IMR-90 (cell line): ENCODE measurements at regions of chr3 and their contacts with region 1.

Region 1: DNA sequence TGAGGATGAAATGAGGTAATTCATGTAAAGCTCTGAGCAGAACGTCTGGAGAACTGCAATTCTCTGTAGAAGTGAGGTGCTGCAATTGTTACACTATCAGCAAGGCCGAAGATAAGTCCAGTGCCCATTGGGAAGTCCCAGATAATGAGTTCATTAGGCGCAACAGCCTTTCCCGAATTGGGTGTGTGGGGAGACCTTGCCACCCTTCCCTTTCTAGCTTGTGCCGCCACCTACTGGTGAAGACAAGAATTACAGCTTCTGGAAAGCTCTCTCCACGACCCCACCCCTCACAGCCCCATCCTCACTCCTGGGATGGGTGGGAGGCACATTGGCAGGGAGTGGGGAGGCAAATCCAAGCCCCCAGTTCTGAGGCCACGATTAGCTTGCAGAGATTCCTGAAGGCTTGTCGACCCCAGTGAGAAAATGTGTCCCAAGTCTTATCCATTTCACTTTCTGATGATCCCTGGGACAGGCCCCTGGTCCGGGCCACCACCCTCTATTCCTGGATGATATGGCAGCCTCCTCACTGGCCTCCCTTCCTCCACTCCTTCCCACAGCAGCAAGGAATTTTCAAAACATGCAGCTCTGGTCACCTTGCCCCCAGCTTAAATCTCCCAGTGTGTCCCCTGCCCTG is 36.4 kb downstream of the FAM3D start:
- DNase-seq: peak; percentile 57
- ATAC-seq: peak; percentile 66
- H3K4me3 ChIP-seq: no peak overlapping the region
- H3K27ac ChIP-seq: no peak overlapping the region
- H3K4me1 ChIP-seq: peaks cover 23% of the 10 kb centered on the region
- H3K27me3 ChIP-seq: no peaks in the 10 kb centered on the region
- CTCF ChIP-seq: peak; percentile 89
- POLR2A ChIP-seq: no peak
- RAD21 ChIP-seq: peak; percentile 85

Region 2: GRCh38 chr3:58305882-58306711 is 324.1 kb before region 1 on chr3 and contains the starts of genes HTD2 and RPP14:
- CTCF ChIA-PET with region 1: no interaction called
- POLR2A ChIA-PET with region 1: no interaction called
- dilution Hi-C with region 1: no loop called
- in situ Hi-C with region 1: no loop called
- intact Hi-C with region 1: loop called (anchors 10 kb)
- DNase-seq: peak; percentile 97
- ATAC-seq: peak; percentile 92
- H3K4me3 ChIP-seq: peak within 1 kb of the TSS; percentile 74
- H3K27ac ChIP-seq: peak within 1 kb of the TSS; percentile 94
- H3K4me1 ChIP-seq: peaks cover 6% of the 10 kb centered on the region
- H3K27me3 ChIP-seq: peaks cover 9% of the 10 kb centered on the region
- CTCF ChIP-seq: peak; percentile 98
- POLR2A ChIP-seq: peak; percentile 92
- RAD21 ChIP-seq: peak; percentile 42
- total RNA-seq, gene HTD2: 11.4 and 13.3 TPM in 2 replicates
- total RNA-seq, gene RPP14: 6.6 and 11.9 TPM in 2 replicates

Region 3: GRCh38 chr3:58332575-58333188 is 297.5 kb before region 1 on chr3 and contains the start of gene PXK:
- CTCF ChIA-PET with region 1: no interaction called
- POLR2A ChIA-PET with region 1: no interaction called
- dilution Hi-C with region 1: no loop called
- in situ Hi-C with region 1: loop called (anchors 10 kb)
- intact Hi-C with region 1: loop called (anchors 10 kb)
- DNase-seq: peak; percentile 70
- ATAC-seq: peak; percentile 87
- H3K4me3 ChIP-seq: peak within 1 kb of the TSS; percentile 91
- H3K27ac ChIP-seq: peak within 1 kb of the TSS; percentile 93
- H3K4me1 ChIP-seq: peaks cover 16% of the 10 kb centered on the region
- H3K27me3 ChIP-seq: no peaks in the 10 kb centered on the region
- CTCF ChIP-seq: peak; percentile 37
- POLR2A ChIP-seq: peak; percentile 32; the same call in 1 of the 2 replicates
- RAD21 ChIP-seq: peak; percentile 46
- total RNA-seq, gene PXK: 14.3 and 15.6 TPM in 2 replicates

Region 4: DNA sequence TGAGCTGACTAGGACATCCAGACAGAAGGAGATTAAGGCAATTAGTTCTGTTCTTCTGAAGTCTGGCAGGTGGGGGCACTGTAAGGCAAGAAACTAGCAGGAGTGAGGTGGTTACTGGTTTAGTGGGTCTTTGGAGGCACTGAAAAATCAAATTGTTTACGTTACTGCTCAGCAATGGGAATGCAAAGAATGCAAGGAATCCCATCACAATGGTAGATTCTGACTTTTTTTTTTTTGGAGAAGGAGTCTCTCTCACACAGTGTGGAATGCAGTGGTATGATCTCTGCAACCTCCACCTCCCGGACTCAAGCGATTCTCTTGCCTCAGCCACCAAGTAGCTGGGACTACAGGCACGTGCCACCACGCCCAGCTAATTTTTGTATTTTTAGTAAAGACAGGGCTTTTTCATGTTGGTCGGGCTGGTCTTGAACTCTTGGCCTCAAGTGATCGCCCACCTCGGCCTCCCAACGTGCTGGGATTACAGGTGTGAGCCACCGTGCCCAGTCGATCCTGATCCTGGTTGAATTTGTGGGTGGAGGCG is 69.4 kb before region 1 on chr3:
- CTCF ChIA-PET with region 1: interaction called, 69 read pairs
- POLR2A ChIA-PET with region 1: no interaction called
- dilution Hi-C with region 1: no loop called
- in situ Hi-C with region 1: loop called (anchors 5 kb)
- intact Hi-C with region 1: loop called (anchors 2 kb)
- DNase-seq: peak; percentile 98
- ATAC-seq: peak; percentile 91
- H3K4me3 ChIP-seq: no peak overlapping the region
- H3K27ac ChIP-seq: peak overlapping the region; percentile 81
- H3K4me1 ChIP-seq: peaks cover 4% of the 10 kb centered on the region; the same call in 1 of the 2 replicates
- H3K27me3 ChIP-seq: no peaks in the 10 kb centered on the region
- CTCF ChIP-seq: peak; percentile 88
- POLR2A ChIP-seq: no peak; the same call in 1 of the 2 replicates
- RAD21 ChIP-seq: peak; percentile 90

Region 5: DNA sequence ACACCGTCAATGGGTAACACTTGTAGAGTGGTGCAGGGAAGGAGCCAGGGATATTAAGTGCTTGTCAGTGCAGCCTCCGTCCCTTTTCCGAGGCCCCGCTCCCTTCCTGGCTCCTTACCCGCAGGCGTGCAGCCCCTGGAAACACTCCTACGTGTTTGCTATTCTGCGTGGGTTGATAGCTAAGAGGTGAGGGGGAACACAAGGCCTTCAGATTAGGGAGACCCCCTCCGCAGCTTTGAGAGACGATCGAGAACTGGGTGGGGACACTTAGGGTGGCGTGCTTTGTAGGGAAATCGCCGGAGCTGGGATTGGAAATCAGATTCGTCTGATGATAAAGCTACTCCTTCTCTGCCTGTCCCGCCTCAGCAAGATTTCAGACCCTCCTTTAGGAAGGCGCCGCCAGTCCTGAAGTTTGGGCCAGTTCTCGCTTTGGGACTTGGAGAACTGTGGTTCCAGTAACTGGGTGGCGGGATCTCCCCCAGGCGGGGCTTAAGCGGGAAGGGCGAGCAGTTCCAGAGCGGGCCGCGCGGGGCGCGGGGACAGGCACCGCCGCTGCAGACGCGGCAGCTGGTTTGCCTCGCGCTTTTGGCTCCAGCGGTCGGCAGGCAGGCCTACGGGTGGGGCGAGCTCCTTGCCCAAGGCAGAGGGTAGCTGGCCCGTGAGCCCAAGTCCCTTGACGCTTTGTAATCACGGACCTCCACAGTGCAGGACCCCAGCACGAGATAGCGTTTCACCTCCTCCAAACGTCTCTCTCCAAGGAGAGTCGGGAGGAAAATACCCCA is 45.0 kb before region 1 on chr3:
- CTCF ChIA-PET with region 1: interaction called, 8 read pairs
- POLR2A ChIA-PET with region 1: no interaction called
- dilution Hi-C with region 1: no loop called
- in situ Hi-C with region 1: no loop called
- intact Hi-C with region 1: loop called (anchors 5 kb)
- DNase-seq: peak; percentile 58
- ATAC-seq: peak; percentile 98
- H3K4me3 ChIP-seq: peak overlapping the region; percentile 58
- H3K27ac ChIP-seq: no peak overlapping the region
- H3K4me1 ChIP-seq: no peaks in the 10 kb centered on the region
- H3K27me3 ChIP-seq: peaks cover 30% of the 10 kb centered on the region
- CTCF ChIP-seq: peak; percentile 66
- POLR2A ChIP-seq: no peak
- RAD21 ChIP-seq: peak; percentile 40

Region 6: GRCh38 chr3:58965865-58966264 is 335.7 kb after region 1 on chr3:
- CTCF ChIA-PET with region 1: interaction called, 10 read pairs
- POLR2A ChIA-PET with region 1: no interaction called
- dilution Hi-C with region 1: no loop called
- in situ Hi-C with region 1: no loop called
- intact Hi-C with region 1: no loop called
- DNase-seq: peak; percentile 71
- ATAC-seq: peak; percentile 53
- H3K4me3 ChIP-seq: no peak overlapping the region
- H3K27ac ChIP-seq: peak overlapping the region; percentile 98
- H3K4me1 ChIP-seq: peaks cover 19% of the 10 kb centered on the region
- H3K27me3 ChIP-seq: no peaks in the 10 kb centered on the region
- CTCF ChIP-seq: no peak
- POLR2A ChIP-seq: no peak
- RAD21 ChIP-seq: no peak